Breast epithelium (tissue), 4 donors: ENCODE measurements at regions of chr4 and their contacts with region 1.

Region 1: DNA sequence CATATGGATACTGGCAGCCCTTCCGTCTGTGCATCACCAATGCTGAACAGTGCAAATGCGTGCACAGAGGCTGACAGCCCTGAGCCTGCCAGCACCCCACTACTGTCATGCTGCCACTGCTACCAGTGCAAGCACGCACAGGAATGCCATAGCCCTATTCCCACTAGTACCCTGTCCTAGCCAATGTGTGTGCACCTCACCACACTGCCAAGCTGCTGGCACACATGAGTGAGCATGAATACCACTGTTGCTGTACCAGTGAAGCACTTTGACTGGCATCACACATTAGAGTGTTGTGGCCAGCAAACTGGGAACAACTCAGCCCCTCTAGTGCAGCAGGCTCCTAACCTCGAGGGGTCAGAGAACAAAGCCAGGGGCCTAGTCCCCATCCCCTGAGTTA is 102.9 kb upstream of the PCDH10 start:
- DNase-seq: no peak
- H3K4me3 ChIP-seq: no peak overlapping the region
- H3K27ac ChIP-seq: no peak overlapping the region
- H3K4me1 ChIP-seq: no peaks in the 10 kb centered on the region
- H3K27me3 ChIP-seq: no peaks in the 10 kb centered on the region
- CTCF ChIP-seq: no peak
- POLR2A ChIP-seq: no peak

Region 2: GRCh38 chr4:132383571-132384199 is 662.5 kb before region 1 on chr4:
- intact Hi-C with region 1: loop called (anchors 10 kb)
- DNase-seq: no peak
- H3K4me3 ChIP-seq: no peak overlapping the region
- H3K27ac ChIP-seq: no peak overlapping the region
- H3K4me1 ChIP-seq: no peaks in the 10 kb centered on the region
- H3K27me3 ChIP-seq: no peaks in the 10 kb centered on the region
- CTCF ChIP-seq: no peak
- POLR2A ChIP-seq: no peak